A549 (cell line): ENCODE measurements at regions of chr1 and their contacts with region 1.

Region 1: GRCh38 chr1:202210385-202210784 is 16.8 kb downstream of the LGR6 start:
- DNase-seq: peak in 1 of 2 experiments; percentile 52
- ATAC-seq: peak; percentile 73 to 75
- H3K4me3 ChIP-seq: no peak overlapping the region
- H3K27ac ChIP-seq: no peak overlapping the region
- H3K4me1 ChIP-seq: peaks cover 11% of the 10 kb centered on the region
- CTCF ChIP-seq: 0 out of 3 replicates have a peak, but pooled peaks have one; percentile 7
- EP300 ChIP-seq: no peak
- POLR2A ChIP-seq: no peak
- RAD21 ChIP-seq: peak in 1 of 2 experiments; percentile 29; a peak in 3 of 5 replicates

Region 2: DNA sequence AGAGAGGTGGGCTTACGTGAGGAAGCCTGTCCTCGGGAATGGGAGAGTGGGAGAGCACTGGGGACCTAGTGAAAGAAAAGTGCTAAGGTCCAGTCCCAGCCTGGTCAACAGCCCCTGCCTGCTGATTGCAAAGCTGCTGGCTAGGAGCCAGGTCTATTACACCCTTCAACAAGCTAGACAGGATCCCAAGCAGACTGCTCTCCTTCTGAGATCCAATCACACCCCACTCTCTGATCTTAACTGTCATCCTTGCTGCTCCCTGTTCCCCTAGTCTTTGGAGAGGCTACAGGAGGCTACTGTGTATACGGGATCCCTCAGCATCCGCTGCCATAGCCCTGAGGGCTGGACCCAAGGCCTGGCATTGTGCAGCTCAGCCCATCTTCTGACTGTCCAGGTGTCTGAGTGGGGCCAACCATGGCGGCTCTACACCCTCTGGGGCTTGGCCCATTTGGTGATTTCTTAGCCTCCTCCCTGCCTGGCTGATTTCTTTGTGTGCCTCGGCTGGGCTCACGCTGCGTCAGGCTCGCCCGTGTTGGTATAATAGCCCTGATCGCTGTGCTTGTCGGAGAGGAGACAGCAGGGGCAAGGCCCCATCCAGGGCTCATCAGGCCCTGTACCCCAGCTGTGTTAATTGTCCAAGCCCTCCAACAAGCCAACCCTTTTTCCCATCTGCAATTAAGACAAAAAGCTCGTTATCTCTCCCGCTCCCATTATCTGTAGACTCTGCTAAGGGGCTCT is 627.5 kb before region 1 on chr1:
- CTCF ChIA-PET with region 1: no interaction called
- POLR2A ChIA-PET with region 1: no interaction called
- DNase-seq: no peak
- ATAC-seq: peak; percentile 45 to 51; a peak in 3 of 6 replicates
- H3K4me3 ChIP-seq: no peak overlapping the region
- H3K27ac ChIP-seq: peak overlapping the region; percentile 23 to 73; a peak in 4 of 6 replicates
- H3K4me1 ChIP-seq: peaks cover 37% of the 10 kb centered on the region
- CTCF ChIP-seq: no peak
- EP300 ChIP-seq: no peak
- POLR2A ChIP-seq: no peak
- RAD21 ChIP-seq: no peak

Region 3: GRCh38 chr1:201983380-201983805 is 227.0 kb before region 1 on chr1:
- CTCF ChIA-PET with region 1: no interaction called
- POLR2A ChIA-PET with region 1: no interaction called
- DNase-seq: no peak
- ATAC-seq: no peak
- H3K4me3 ChIP-seq: peak overlapping the region; percentile 60
- H3K27ac ChIP-seq: peak overlapping the region; percentile 88 to 97
- H3K4me1 ChIP-seq: peaks cover 14% of the 10 kb centered on the region
- CTCF ChIP-seq: no peak
- EP300 ChIP-seq: no peak
- POLR2A ChIP-seq: no peak
- RAD21 ChIP-seq: no peak

Region 4: DNA sequence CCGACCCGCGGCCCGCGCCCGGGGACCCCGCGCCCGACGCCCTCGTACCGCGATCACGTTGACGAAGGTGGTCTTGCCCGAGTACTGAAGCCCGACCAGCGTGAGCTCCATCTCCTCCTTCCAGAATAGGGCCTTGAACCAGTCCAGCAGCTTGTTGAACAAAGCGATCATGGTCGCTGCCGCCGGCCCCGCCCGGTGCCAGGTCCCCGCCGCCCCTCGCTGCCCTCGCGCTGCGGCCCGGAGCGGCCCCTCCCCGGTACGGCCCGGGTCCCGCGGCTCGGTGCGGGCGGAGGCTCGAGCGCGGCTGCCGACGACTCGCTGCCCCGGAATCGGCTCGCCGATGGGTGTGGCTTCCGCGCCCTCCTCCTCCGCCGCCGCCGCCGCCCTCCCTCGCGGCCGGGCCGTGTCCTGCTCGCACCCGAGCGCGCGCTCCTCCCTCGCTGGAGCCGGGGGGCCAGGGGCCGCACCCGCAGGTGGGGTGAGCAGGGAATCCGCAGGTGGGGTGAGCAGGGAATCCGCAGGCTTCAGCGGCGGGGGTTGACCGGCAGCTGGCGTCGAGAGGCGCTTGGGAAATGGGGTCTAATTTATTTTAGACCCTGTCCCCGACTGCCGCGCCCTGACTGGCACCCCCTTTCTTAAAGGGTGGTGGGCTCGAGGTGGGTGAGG is 65.8 kb before region 1 on chr1 and contains the start of gene ARL8A:
- CTCF ChIA-PET with region 1: no interaction called
- POLR2A ChIA-PET with region 1: no interaction called
- DNase-seq: peak; percentile 36 to 68
- ATAC-seq: peak; percentile 80 to 81
- H3K4me3 ChIP-seq: peak within 1 kb of the TSS; percentile 94
- H3K27ac ChIP-seq: peak within 1 kb of the TSS; percentile 95 to 98
- H3K4me1 ChIP-seq: peaks cover 13% of the 10 kb centered on the region; the same call in 2 of the 3 replicates
- CTCF ChIP-seq: no peak
- EP300 ChIP-seq: no peak
- POLR2A ChIP-seq: peak; percentile 74
- RAD21 ChIP-seq: no peak
- polyA plus RNA-seq, gene ARL8A: 49.8 and 57.8 TPM in 2 replicates

Region 5: DNA sequence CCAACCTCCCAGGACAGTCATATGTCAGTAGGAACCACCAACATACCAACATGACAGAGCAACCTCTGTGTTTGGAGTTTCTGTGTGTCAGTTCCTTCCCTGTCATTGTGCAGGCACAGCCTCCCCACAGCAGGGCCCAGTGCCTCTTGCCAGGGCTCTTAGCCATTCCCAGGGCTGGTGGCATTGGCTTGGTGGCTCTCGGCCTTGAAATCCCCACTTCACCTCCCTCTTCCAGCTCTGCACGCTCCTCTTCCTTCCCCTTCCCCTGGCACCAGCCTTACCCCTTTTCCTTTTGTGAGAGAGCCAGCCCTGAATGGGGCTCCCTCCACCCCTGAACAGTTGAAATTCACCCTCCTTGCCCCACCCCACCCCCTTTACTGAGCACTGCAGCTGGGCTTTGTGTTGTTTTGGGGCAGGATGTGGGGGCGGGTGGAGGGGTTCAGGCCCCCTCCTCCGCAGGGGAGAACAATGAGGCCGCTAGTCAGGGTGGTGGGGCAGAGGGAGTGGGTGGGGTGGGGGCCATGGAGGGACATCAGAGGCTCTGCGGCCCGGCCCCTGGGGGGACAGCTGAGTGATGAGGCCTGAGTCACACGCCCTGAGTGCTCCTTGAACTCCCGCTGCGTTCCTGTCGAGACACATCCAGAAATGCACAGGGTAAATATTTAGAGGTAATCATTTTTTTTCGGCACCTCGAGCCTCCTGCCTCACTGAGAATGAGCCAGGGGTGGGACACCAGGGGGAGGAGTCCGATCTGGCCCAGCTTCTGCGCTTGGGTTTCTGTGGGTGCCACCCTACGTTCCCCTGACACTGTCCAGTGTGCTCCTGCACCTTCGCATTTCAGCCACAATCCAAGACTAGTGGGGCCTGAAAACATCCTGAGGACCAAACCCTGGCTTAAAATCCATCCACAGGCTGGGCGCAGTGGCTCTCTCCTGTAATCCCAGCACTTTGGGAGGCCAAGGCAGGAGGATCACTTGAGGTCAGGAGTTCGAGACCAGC is 11.8 kb after region 1 on chr1:
- CTCF ChIA-PET with region 1: interaction called, 21 read pairs
- POLR2A ChIA-PET with region 1: no interaction called
- DNase-seq: no peak
- ATAC-seq: peak; percentile 67 to 72
- H3K4me3 ChIP-seq: no peak overlapping the region
- H3K27ac ChIP-seq: peak overlapping the region; percentile 46 to 84
- H3K4me1 ChIP-seq: peaks cover 43% of the 10 kb centered on the region
- CTCF ChIP-seq: no peak
- EP300 ChIP-seq: peak; percentile 45 to 73; a peak in 2 of 5 replicates
- POLR2A ChIP-seq: no peak
- RAD21 ChIP-seq: no peak; a peak in 1 of 5 replicates